Gastrocnemius medialis (tissue), 4 donors: ENCODE measurements at regions of chr2 and their contacts with region 1.

Region 1: GRCh38 chr2:215878482-215879055 is 134.8 kb downstream of the MREG start:
- DNase-seq: no peak
- ATAC-seq: no peak
- H3K4me3 ChIP-seq: no peak overlapping the region
- H3K27ac ChIP-seq: no peak overlapping the region
- H3K4me1 ChIP-seq: peaks cover 0 to 4% of the 10 kb centered on the region in 2 donors
- H3K27me3 ChIP-seq: no peaks in the 10 kb centered on the region
- CTCF ChIP-seq: no peak
- POLR2A ChIP-seq: no peak

Region 2: DNA sequence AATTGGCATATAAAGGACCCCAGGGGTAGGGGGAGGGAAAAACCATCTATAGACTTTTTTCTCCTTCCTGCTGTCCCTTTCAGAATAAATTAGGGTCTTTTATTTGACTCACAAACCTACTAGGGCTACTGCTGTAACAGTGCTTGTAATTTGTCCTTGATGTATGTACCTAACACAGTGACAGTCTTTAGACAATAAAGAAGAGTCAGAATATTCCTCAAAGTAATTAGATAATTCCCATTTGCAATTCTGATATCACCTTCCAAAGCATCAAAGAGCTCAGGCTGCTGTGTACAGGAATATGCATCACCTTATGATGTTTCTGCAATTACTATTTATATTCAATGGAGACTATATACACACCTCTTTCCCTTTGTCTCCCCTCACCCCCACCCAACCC is 26.9 kb before region 1 on chr2:
- in situ Hi-C with region 1: no loop called
- intact Hi-C with region 1: loop called (anchors 2 kb)
- DNase-seq: no peak
- ATAC-seq: no peak
- H3K4me3 ChIP-seq: no peak overlapping the region
- H3K27ac ChIP-seq: no peak overlapping the region
- H3K4me1 ChIP-seq: no peaks in the 10 kb centered on the region
- H3K27me3 ChIP-seq: no peaks in the 10 kb centered on the region
- CTCF ChIP-seq: no peak
- POLR2A ChIP-seq: no peak